ENCODE measurements at regions of chr12 and their contacts with region 1.

Region 1: GRCh38 chr12:62435303-62436163 is 31.1 kb upstream of the MON2 start:
- DNase-seq: peak; percentile 63 to 70
- H3K4me3 ChIP-seq: peak overlapping the region; percentile 54
- H3K4me3 Mint-ChIP-seq: peak overlapping the region; percentile 93
- H3K27ac Mint-ChIP-seq: peak overlapping the region; percentile 39
- H3K4me1 ChIP-seq: no peaks in the 10 kb centered on the region
- H3K4me1 Mint-ChIP-seq: no peaks in the 10 kb centered on the region
- H3K27me3 ChIP-seq: no peaks in the 10 kb centered on the region
- H3K27me3 Mint-ChIP-seq: peaks cover 10% of the 10 kb centered on the region
- CTCF ChIP-seq: peak in 1 of 2 experiments; percentile 74

Region 2: DNA sequence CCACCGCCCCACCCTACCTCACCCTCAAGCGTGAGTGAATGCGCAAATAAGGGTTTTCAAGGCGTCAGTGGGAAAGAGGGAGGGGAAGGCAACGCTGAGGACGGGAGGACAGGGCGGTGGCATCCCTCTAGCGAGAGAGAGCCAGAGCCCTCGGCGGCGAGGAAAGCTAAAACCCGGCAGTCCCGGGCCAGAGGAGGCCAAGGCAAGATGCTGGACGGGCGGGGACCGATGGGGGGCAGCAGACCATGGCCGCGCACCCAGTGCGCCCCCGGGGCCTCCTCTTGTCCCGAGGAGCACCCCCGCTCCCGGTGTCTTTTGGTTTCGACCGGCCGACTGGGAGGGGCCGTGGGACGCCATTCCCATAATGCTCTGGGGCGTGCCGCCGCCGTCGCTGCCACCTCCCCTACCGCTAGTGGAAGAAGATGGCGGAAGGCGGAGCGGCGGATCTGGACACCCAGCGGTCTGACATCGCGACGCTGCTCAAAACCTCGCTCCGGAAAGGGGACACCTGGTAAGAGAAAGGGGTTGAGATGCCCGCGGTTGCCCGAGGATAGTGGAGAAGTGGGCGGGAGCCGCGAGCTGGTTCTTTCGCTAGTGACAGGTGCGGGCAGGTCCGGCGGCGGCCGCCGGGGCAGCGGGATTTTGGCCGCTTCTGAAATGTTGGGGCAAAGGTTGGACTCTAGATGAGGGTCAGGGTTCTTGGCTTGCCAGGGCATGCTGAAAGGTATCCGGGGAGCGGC is 175.4 kb before region 1 on chr12 and contains the start of gene USP15:
- CTCF ChIA-PET with region 1: interaction called, 6 read pairs
- POLR2A ChIA-PET with region 1: no interaction called
- intact Hi-C with region 1: loop called (anchors 1 kb)
- DNase-seq: peak; percentile 97 to 99
- H3K4me3 ChIP-seq: peak within 1 kb of the TSS; percentile 84
- H3K4me3 Mint-ChIP-seq: peak within 1 kb of the TSS; percentile 82
- H3K27ac Mint-ChIP-seq: peak within 1 kb of the TSS; percentile 94
- H3K4me1 ChIP-seq: no peaks in the 10 kb centered on the region; the same call in 1 of the 2 replicates
- H3K4me1 Mint-ChIP-seq: no peaks in the 10 kb centered on the region
- H3K27me3 ChIP-seq: no peaks in the 10 kb centered on the region
- H3K27me3 Mint-ChIP-seq: no peaks in the 10 kb centered on the region
- CTCF ChIP-seq: peak; percentile 75 to 92
- total RNA-seq, gene USP15: 42.9 and 43.5 TPM in 2 replicates

Region 3: DNA sequence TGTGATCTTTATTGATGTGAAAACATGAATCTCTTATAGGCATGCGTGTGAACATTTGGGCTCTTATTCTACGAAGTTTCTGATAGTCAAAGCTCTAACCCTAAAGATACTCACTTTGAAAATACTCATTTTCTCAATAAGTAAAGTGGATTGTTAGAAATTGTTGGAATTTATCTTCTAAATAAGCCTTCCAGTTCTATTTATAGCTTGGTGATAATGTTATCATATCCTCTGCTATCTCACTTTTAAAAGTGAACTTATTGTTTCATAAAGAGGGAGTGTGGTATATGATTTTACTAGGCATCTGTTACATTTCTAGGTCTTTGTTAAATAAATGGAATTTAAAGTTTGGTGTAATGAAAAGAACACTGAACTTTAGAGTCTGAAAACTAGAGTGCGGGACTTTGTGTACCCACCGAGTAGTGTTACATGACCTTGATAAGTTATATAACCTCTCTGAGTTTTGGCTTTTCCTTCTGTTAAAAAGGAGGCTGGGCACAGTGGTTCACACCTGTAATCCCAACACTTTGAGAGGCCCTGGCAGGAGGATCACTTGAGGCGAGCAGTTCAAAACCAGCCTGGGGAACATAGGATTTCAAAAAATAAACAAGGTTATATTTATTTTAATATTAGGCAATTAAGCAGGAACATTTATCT is 161.7 kb before region 1 on chr12:
- CTCF ChIA-PET with region 1: no interaction called
- POLR2A ChIA-PET with region 1: no interaction called
- intact Hi-C with region 1: no loop called
- DNase-seq: no peak
- H3K4me3 ChIP-seq: no peak overlapping the region
- H3K4me3 Mint-ChIP-seq: no peak overlapping the region
- H3K27ac Mint-ChIP-seq: no peak overlapping the region
- H3K4me1 ChIP-seq: no peaks in the 10 kb centered on the region
- H3K4me1 Mint-ChIP-seq: no peaks in the 10 kb centered on the region
- H3K27me3 ChIP-seq: no peaks in the 10 kb centered on the region
- H3K27me3 Mint-ChIP-seq: no peaks in the 10 kb centered on the region
- CTCF ChIP-seq: no peak

Region 4: DNA sequence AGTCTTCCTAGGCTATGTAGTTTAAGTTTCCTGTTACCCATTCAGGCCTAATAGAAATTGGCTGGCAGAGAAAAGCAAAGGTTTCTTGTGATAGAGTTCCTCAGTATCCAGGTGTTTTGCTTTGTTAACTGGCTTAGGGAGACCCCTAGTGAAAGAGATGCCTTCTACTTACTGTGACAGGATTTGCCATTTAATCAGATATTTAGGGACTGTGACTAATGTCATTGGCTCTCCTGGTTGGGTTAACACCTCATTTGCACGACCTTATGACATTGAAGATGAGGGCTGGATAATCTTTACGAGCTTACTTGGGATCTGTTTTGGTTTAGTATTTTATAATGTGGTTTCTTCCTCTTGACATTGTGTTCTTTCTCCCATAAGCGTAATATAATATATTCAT is 36.9 kb after region 1 on chr12:
- CTCF ChIA-PET with region 1: interaction called, 10 read pairs
- POLR2A ChIA-PET with region 1: interaction called, 3 read pairs
- intact Hi-C with region 1: loop called (anchors 1 kb)
- DNase-seq: peak in 1 of 2 experiments; percentile 9
- H3K4me3 ChIP-seq: no peak overlapping the region
- H3K4me3 Mint-ChIP-seq: no peak overlapping the region
- H3K27ac Mint-ChIP-seq: no peak overlapping the region
- H3K4me1 ChIP-seq: no peaks in the 10 kb centered on the region
- H3K4me1 Mint-ChIP-seq: no peaks in the 10 kb centered on the region
- H3K27me3 ChIP-seq: no peaks in the 10 kb centered on the region
- H3K27me3 Mint-ChIP-seq: no peaks in the 10 kb centered on the region
- CTCF ChIP-seq: peak in 1 of 2 experiments; percentile 30

Region 5: DNA sequence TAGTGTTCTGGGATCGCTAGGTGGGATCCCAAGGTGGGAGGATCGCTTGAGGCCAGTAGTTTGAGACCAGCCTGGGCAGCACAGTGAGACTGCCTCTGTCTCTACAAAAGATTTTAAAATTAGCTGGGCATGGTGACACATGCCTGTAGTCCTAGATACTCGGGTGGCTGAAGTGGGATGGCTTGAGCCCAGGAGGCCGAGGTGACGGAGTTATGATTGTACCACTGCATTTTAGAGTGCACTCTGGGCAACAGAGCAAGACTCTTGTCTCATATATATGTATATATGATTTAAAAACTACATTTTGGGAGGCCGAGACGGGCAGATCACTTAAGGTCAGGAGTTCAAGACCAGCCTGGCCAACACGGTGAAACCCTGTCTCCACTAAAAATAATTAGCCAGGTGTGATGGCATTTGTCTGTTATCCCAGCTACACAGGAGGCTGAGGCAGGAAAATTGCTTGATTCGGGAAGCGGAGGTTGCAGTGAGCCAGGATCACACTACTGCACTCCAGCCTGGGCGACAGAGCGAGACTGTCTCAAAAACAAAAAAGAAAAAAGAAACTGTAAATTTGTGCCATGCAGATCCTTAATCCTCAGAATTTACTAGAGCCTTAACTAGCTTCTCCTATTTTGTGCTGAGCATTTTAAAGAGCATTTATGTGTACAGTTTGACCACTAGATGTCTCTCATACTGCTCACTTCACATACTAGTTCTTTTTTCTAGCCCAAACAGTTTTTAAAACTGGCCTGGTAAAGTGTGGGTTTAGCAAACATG is 145.9 kb after region 1 on chr12:
- CTCF ChIA-PET with region 1: no interaction called
- POLR2A ChIA-PET with region 1: no interaction called
- intact Hi-C with region 1: loop called (anchors 2 kb)
- DNase-seq: peak in 1 of 2 experiments; percentile 14
- H3K4me3 ChIP-seq: no peak overlapping the region
- H3K4me3 Mint-ChIP-seq: no peak overlapping the region
- H3K27ac Mint-ChIP-seq: no peak overlapping the region
- H3K4me1 ChIP-seq: no peaks in the 10 kb centered on the region
- H3K4me1 Mint-ChIP-seq: peaks cover 7% of the 10 kb centered on the region
- H3K27me3 ChIP-seq: no peaks in the 10 kb centered on the region
- H3K27me3 Mint-ChIP-seq: no peaks in the 10 kb centered on the region
- CTCF ChIP-seq: peak; percentile 37 to 75

Region 6: DNA sequence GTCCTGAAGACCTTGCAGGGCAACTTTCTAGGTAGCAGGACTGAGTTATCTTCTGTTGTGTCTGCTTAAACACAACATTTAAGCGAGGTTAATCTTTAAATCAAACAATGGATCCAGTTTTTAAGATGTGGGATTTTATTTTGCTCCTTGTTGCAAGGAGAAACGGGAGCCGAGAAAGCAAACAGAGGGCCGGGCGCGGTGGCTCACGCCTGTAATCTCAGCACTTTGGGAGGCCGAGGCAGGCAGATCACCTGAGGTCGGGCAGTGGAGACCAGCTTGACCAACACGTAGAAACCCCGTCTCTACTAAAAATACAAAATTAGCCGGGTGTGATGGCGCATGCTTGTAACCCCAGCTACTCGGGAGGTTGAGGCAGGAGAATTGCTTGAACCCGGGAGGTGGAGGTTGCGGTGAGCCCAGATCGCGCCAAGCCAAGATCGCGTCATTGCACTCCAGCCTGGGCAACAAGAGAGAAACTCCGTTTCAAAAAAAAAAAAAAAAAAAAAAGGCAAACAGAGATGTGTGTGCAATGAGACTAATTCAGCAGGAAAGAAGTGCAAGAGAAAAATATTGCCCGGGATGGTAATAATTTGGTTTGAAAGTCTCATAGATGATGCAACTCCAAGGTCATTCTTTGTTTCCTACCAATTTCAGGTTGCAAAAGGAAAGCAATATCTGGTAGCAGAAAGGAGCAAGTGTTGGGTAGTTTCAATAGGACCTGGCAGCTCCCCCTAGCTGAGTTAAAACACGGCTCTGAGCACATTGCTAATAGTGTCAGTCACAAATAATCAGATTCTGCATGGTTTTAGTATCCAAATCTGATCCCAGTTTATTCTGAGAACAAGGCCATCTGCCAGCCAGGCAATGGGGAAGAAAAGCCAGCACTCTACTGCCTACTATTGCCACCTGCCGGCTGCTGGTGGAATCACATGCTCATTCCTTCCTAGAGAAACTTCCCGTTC is 358.0 kb after region 1 on chr12:
- CTCF ChIA-PET with region 1: no interaction called
- POLR2A ChIA-PET with region 1: no interaction called
- intact Hi-C with region 1: loop called (anchors 2 kb)
- DNase-seq: peak; percentile 64 to 82
- H3K4me3 ChIP-seq: no peak overlapping the region
- H3K4me3 Mint-ChIP-seq: no peak overlapping the region
- H3K27ac Mint-ChIP-seq: no peak overlapping the region
- H3K4me1 ChIP-seq: peaks cover 32% of the 10 kb centered on the region
- H3K4me1 Mint-ChIP-seq: peaks cover 9% of the 10 kb centered on the region
- H3K27me3 ChIP-seq: no peaks in the 10 kb centered on the region
- H3K27me3 Mint-ChIP-seq: no peaks in the 10 kb centered on the region
- CTCF ChIP-seq: peak; percentile 80 to 91